A549 (cell line): ENCODE measurements at regions of chr15 and their contacts with region 1.

Region 1: GRCh38 chr15:26891448-26892181 is 24.8 kb downstream of the GABRA5 start:
- DNase-seq: peak; percentile 48 to 70
- ATAC-seq: peak; percentile 61 to 79; a peak in 4 of 6 replicates
- H3K4me3 ChIP-seq: no peak overlapping the region
- H3K27ac ChIP-seq: no peak overlapping the region
- H3K4me1 ChIP-seq: peaks cover 20% of the 10 kb centered on the region
- CTCF ChIP-seq: peak; percentile 63
- EP300 ChIP-seq: no peak
- POLR2A ChIP-seq: no peak
- RAD21 ChIP-seq: peak; percentile 68 to 79

Region 2: DNA sequence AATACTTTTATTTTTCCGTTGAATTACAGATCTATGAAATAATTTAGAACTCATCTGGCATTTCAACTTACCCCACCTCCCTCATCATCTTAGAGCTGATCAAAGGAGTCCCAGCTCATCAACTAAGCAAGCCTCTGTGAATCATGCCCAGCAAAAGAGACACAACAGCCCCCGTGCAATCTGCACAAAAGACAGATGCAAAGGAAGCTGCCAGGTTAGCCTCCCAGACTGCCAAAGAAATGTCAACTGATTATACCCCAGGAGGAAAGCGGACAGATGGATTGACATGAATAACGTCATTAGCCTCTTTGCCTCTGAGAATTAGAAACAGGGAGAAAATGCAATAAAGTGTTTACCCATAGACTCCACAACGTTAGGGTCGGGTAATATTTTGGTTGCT is 193.7 kb before region 1 on chr15:
- CTCF ChIA-PET with region 1: no interaction called
- POLR2A ChIA-PET with region 1: no interaction called
- DNase-seq: no peak
- ATAC-seq: no peak
- H3K4me3 ChIP-seq: no peak overlapping the region
- H3K27ac ChIP-seq: no peak overlapping the region
- H3K4me1 ChIP-seq: 0 out of 3 replicates have a peak, but pooled peaks cover 1% of the 10 kb centered on the region
- CTCF ChIP-seq: no peak
- EP300 ChIP-seq: no peak
- POLR2A ChIP-seq: no peak
- RAD21 ChIP-seq: no peak

Region 3: DNA sequence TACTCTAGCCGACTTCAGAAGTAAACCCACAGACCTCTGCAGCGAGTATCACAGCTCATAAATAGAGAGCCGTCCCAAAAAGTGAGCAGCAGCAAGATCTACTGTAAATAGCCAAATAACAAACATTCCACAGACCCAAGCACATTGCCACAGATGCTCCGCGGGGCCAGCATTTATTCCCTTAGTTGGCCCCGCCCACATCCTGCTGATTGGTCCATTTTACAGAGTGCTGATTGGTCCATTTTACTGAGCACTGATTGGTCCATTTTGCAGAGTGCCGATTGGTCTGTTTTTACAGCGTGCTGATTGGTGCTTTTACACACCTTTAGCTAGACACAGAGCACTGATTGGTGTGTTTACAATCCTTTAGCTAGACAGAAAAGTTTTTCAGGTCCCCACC is 101.5 kb before region 1 on chr15:
- CTCF ChIA-PET with region 1: no interaction called
- POLR2A ChIA-PET with region 1: no interaction called
- DNase-seq: peak in 1 of 2 experiments; percentile 5
- ATAC-seq: no peak
- H3K4me3 ChIP-seq: no peak overlapping the region
- H3K27ac ChIP-seq: no peak overlapping the region
- H3K4me1 ChIP-seq: no peaks in the 10 kb centered on the region
- CTCF ChIP-seq: no peak
- EP300 ChIP-seq: no peak
- POLR2A ChIP-seq: no peak
- RAD21 ChIP-seq: no peak

Region 4: DNA sequence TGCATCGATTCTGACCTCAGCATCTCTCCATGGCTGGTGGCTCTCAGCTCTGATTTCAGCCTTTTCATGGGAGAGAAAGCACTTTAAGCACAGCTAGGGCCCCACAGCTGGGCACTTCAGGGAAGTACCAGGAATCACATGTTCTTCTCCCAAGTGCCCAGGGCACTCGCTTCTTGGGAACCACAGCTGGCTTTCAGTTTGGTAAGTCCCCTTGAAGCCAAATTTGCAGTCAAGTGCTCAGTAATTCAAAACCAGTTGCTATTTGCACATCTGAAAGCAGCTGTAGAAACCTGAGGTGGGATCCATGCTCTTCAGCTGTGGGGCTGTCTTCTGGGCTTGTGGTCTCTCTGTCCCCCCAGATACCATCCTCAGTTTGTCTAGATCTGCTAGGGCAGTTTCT is 11.9 kb before region 1 on chr15:
- CTCF ChIA-PET with region 1: interaction called, 30 read pairs
- POLR2A ChIA-PET with region 1: interaction called, 3 read pairs
- DNase-seq: no peak
- ATAC-seq: no peak
- H3K4me3 ChIP-seq: no peak overlapping the region
- H3K27ac ChIP-seq: no peak overlapping the region
- H3K4me1 ChIP-seq: no peaks in the 10 kb centered on the region
- CTCF ChIP-seq: no peak
- EP300 ChIP-seq: no peak
- POLR2A ChIP-seq: no peak
- RAD21 ChIP-seq: no peak

Region 5: DNA sequence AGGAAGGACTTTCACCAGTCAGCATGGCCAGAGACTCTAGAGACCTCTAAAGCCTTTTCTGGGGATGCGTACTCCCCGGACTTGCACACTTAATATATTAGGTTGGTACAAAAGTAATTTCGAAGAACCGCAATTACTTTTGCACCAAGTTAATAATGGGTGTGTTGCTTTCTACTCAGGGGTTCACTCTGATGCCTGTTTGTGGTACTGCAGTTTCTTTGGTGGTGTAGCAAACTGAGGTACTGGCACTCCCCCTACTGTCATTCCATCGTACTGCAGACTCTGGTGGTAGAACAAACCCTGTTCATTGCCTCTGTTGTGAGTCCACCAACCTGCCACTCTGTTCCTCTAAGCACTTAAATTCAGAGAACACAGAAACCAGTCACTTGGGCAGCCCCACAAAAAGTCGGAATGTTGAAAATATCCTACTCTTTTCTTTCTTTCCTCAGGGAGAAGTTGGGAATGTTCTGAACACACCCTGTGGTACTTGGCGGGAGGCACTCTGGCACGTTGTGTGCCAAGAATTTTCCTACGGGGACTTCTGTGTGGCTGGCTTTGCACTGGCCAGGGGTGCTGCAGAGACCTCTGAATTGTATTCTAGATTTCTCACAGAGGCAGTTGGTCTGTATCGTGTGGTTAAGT is 125.7 kb after region 1 on chr15:
- CTCF ChIA-PET with region 1: interaction called, 21 read pairs
- POLR2A ChIA-PET with region 1: no interaction called
- DNase-seq: peak; percentile 81 to 87
- ATAC-seq: peak; percentile 98 to 100
- H3K4me3 ChIP-seq: no peak overlapping the region
- H3K27ac ChIP-seq: no peak overlapping the region
- H3K4me1 ChIP-seq: no peaks in the 10 kb centered on the region
- CTCF ChIP-seq: peak; percentile 88
- EP300 ChIP-seq: no peak
- POLR2A ChIP-seq: no peak
- RAD21 ChIP-seq: peak; percentile 85 to 93